ENCODE measurements at regions of chr12 and their contacts with region 1.

Region 1: DNA sequence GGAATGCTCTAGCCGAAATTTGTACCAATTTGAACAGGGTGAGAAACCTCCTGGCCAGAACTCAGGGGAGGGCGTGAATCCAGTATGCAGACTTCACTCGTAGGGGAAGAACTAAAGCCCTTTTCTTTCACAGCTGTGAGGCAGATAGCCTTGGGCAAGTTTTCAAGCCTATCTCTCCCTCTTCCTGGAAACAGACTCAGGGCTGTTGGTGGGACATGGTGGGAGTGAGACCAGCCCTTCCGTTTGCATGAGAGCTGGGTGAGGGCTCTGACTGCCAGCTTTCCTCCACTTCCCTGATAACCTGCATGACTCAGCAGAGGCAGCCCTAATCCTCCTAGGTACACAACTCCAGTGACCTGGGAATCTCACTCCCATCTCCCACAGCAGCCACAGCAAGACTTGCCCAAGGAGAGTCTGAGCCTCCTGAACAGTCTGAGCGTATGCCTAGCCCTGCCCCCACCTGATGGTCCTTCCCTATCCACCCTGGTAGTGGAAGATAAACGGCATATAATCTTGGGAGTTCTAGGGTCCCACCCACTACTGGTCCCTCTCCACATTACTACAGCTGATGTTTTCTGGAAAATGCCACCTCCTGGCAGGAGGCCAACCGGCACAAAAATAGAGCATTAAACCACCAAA is 170.1 kb upstream of the AMIGO2 start:
- DNase-seq: peak; percentile 61
- H3K4me3 Mint-ChIP-seq: peak overlapping the region; percentile 63
- H3K27ac Mint-ChIP-seq: peak overlapping the region; percentile 85
- H3K4me1 Mint-ChIP-seq: peaks cover 13% of the 10 kb centered on the region
- H3K27me3 Mint-ChIP-seq: no peaks in the 10 kb centered on the region
- CTCF ChIP-seq: no peak

Region 2: GRCh38 chr12:47218191-47218654 is 31.6 kb before region 1 on chr12:
- CTCF ChIA-PET with region 1: no interaction called
- POLR2A ChIA-PET with region 1: no interaction called
- intact Hi-C with region 1: no loop called
- DNase-seq: no peak
- H3K4me3 Mint-ChIP-seq: no peak overlapping the region
- H3K27ac Mint-ChIP-seq: no peak overlapping the region
- H3K4me1 Mint-ChIP-seq: peaks cover 32% of the 10 kb centered on the region
- H3K27me3 Mint-ChIP-seq: no peaks in the 10 kb centered on the region
- CTCF ChIP-seq: no peak

Region 3: GRCh38 chr12:47237751-47238211 is 12.1 kb before region 1 on chr12:
- CTCF ChIA-PET with region 1: no interaction called
- POLR2A ChIA-PET with region 1: interaction called, 10 read pairs
- intact Hi-C with region 1: no loop called
- DNase-seq: no peak
- H3K4me3 Mint-ChIP-seq: no peak overlapping the region
- H3K27ac Mint-ChIP-seq: no peak overlapping the region
- H3K4me1 Mint-ChIP-seq: peaks cover 18% of the 10 kb centered on the region
- H3K27me3 Mint-ChIP-seq: no peaks in the 10 kb centered on the region
- CTCF ChIP-seq: no peak

Region 4: GRCh38 chr12:47270782-47271664 is 21.2 kb after region 1 on chr12:
- CTCF ChIA-PET with region 1: interaction called, 4 read pairs
- POLR2A ChIA-PET with region 1: interaction called, 13 read pairs
- intact Hi-C with region 1: no loop called
- DNase-seq: peak; percentile 87
- H3K4me3 Mint-ChIP-seq: peak overlapping the region; percentile 33
- H3K27ac Mint-ChIP-seq: peak overlapping the region; percentile 87
- H3K4me1 Mint-ChIP-seq: peaks cover 61% of the 10 kb centered on the region
- H3K27me3 Mint-ChIP-seq: no peaks in the 10 kb centered on the region
- CTCF ChIP-seq: no peak

Region 5: DNA sequence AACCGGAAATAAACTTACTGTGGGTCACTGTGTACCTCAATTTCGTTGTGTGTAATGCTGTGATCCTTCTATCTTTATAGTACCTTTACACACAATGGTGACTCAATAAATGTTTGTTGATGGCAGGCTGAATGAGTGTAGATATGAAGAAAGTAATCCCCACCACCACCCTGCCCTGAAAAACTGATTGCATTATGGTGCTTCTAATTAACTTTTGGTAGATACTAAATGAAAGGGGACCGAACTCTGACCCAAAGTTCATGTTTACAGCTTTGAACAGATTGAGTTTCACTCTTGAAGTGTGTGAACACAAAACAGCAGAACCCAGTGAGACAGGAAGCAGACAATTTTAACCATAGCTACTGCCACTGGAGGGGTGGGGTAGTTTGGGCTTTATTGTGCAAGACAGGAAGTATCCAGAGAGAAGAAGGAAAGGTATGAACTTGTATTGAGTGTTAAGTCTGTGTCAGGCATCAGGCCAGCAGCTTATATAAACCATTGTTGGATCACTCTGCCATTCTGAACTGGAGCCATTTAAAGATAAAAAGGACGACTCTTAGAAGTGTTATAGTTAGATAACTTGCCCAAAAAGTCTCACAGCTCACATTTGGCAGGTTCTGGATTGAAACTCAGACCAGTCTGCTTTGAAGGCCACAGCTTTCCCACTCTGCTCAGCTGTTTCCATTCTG is 26.9 kb after region 1 on chr12:
- CTCF ChIA-PET with region 1: interaction called, 4 read pairs
- POLR2A ChIA-PET with region 1: interaction called, 13 read pairs
- intact Hi-C with region 1: no loop called
- DNase-seq: peak; percentile 93
- H3K4me3 Mint-ChIP-seq: peak overlapping the region; percentile 34
- H3K27ac Mint-ChIP-seq: peak overlapping the region; percentile 83
- H3K4me1 Mint-ChIP-seq: peaks cover 56% of the 10 kb centered on the region
- H3K27me3 Mint-ChIP-seq: no peaks in the 10 kb centered on the region
- CTCF ChIP-seq: no peak

Measured in MCF 10A (cell line).